Endothelial cell of umbilical vein (primary cell): ENCODE measurements at regions of chr7 and their contacts with region 1.

Region 1: DNA sequence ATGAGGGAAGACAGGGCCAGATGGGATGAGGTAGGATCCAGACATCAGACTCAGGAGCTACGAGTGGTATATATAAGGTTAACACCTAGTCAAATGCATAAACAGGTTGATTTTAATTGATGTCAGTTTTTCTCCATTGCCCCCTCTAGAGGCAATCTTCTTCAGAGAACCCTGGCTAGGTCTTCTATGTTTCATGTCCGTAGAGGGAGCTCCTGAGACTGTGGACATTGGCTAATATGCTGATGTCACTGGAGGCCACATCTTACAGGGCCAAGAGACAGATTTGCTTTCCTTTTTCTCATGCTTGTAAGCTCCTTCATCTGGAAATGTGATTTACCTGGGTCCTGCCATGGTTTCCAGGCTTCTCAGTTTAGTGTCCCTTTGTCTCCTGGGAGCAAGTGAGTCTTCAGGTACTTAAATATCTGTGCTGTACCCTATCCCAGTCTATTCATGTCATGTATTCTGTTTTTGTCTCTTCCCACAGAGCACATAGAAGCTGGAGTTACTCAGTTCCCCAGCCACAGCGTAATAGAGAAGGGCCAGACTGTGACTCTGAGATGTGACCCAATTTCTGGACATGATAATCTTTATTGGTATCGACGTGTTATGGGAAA is 161.6 kb upstream of the PRSS1 start:
- DNase-seq: peak; percentile 66
- H3K4me3 ChIP-seq: no peak overlapping the region
- H3K27ac ChIP-seq: no peak overlapping the region
- H3K4me1 ChIP-seq: peaks cover 10% of the 10 kb centered on the region
- H3K27me3 ChIP-seq: no peaks in the 10 kb centered on the region
- CTCF ChIP-seq: peak; percentile 63 to 82
- POLR2A ChIP-seq: no peak

Region 2: DNA sequence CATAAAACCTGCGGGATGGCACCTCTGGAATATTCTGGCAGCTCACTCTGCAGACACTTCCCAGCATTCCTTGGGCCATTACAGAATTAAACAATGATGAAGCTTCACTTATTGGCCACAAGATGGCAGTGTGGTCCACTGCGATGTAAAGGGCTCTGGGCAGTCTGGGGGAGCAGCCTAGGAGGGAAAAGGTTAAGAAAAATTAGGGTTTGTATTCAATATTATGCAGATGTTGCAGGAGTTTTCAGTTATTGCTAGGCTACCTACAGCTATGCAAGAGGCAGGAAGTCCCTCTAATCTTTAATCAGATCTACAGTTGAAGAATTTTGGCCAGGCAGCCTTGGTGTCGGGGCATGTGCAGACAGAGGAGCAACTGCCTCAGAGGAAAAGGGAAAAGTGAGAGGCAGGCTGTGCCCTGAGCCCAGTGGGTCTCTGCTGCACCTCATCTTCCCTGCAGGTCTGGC is 71.6 kb before region 1 on chr7:
- CTCF ChIA-PET with region 1: interaction called, 14 read pairs
- POLR2A ChIA-PET with region 1: no interaction called
- dilution Hi-C with region 1: no loop called
- intact Hi-C with region 1: no loop called
- DNase-seq: peak; percentile 65
- H3K4me3 ChIP-seq: no peak overlapping the region
- H3K27ac ChIP-seq: no peak overlapping the region
- H3K4me1 ChIP-seq: no peaks in the 10 kb centered on the region
- H3K27me3 ChIP-seq: peaks cover 9 to 13% of the 10 kb centered on the region in 2 experiments
- CTCF ChIP-seq: peak; percentile 75 to 79
- POLR2A ChIP-seq: no peak

Region 3: DNA sequence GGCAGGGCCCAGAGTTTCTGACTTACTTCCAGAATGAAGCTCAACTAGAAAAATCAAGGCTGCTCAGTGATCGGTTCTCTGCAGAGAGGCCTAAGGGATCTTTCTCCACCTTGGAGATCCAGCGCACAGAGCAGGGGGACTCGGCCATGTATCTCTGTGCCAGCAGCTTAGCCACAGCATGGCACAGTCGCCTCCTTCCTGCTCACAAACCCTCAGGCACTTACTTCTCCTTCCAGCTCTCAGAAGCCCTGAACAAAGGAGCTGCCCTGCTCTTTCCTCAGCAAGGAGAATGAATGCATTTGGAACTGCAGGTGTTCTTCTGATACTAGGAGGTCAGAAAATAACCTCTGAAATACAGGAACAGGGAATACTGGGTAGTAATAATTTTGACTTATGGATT is 58.1 kb before region 1 on chr7:
- CTCF ChIA-PET with region 1: interaction called, 181 read pairs
- POLR2A ChIA-PET with region 1: no interaction called
- dilution Hi-C with region 1: no loop called
- intact Hi-C with region 1: no loop called
- DNase-seq: no peak
- H3K4me3 ChIP-seq: no peak overlapping the region
- H3K27ac ChIP-seq: no peak overlapping the region
- H3K4me1 ChIP-seq: no peaks in the 10 kb centered on the region
- H3K27me3 ChIP-seq: peaks cover 19 to 29% of the 10 kb centered on the region in 2 experiments
- CTCF ChIP-seq: no peak
- POLR2A ChIP-seq: no peak

Region 4: DNA sequence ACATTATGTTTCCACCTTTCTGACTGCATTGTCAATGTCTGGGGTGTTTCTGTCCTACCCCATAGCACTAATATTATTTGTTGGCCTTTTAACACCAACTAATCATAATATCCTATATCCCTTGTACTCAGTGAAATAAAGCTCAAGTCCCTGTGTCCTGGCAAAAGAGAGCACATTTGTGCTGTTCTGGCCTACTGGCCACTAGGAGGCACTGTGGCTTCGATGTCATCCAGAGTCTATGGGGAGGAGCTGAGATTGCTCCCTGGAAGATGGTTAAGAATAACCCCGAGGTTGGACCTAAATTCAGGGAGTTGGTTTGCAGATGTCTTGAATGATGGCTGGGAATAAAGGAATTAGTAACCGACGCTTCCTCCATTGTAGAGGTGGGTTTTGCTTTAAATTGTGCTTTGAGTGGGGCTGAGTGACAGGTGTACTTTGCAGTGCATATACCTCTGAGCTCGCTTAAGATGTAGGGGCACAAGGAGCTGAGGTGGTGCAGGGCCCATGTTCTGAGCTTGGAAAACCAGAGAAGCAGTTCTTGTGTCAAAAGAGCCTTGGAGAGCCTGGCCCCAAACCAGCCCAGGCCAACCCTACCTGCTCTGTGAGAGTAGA is 29.6 kb before region 1 on chr7:
- CTCF ChIA-PET with region 1: interaction called, 88 read pairs
- POLR2A ChIA-PET with region 1: interaction called, 3 read pairs
- dilution Hi-C with region 1: no loop called
- intact Hi-C with region 1: loop called (anchors 1 kb)
- DNase-seq: peak; percentile 48
- H3K4me3 ChIP-seq: no peak overlapping the region
- H3K27ac ChIP-seq: peak overlapping the region; percentile 70
- H3K4me1 ChIP-seq: peaks cover 40% of the 10 kb centered on the region
- H3K27me3 ChIP-seq: no peaks in the 10 kb centered on the region
- CTCF ChIP-seq: peak; percentile 62 to 89
- POLR2A ChIP-seq: no peak

Region 5: GRCh38 chr7:142568435-142569097 is 19.1 kb before region 1 on chr7:
- CTCF ChIA-PET with region 1: interaction called, 31 read pairs
- POLR2A ChIA-PET with region 1: no interaction called
- dilution Hi-C with region 1: no loop called
- intact Hi-C with region 1: loop called (anchors 2 kb)
- DNase-seq: peak; percentile 80
- H3K4me3 ChIP-seq: no peak overlapping the region
- H3K27ac ChIP-seq: peak overlapping the region; percentile 44
- H3K4me1 ChIP-seq: peaks cover 27% of the 10 kb centered on the region
- H3K27me3 ChIP-seq: no peaks in the 10 kb centered on the region
- CTCF ChIP-seq: no peak
- POLR2A ChIP-seq: peak; percentile 41

Region 6: GRCh38 chr7:142603870-142604448 is 16.3 kb after region 1 on chr7:
- CTCF ChIA-PET with region 1: interaction called, 41 read pairs
- POLR2A ChIA-PET with region 1: no interaction called
- dilution Hi-C with region 1: no loop called
- intact Hi-C with region 1: no loop called
- DNase-seq: peak; percentile 71
- H3K4me3 ChIP-seq: peak overlapping the region in 2 of 3 experiments; percentile 45 to 68
- H3K27ac ChIP-seq: no peak overlapping the region
- H3K4me1 ChIP-seq: peaks cover 7% of the 10 kb centered on the region
- H3K27me3 ChIP-seq: no peaks in the 10 kb centered on the region
- CTCF ChIP-seq: peak; percentile 67 to 75
- POLR2A ChIP-seq: no peak